ENCODE measurements at regions of chr2 and their contacts with region 1.

Region 1: GRCh38 chr2:25453199-25453905 is 111.6 kb upstream of the DNMT3A start:
- DNase-seq: peak; percentile 24
- H3K4me3 Mint-ChIP-seq: peak overlapping the region; percentile 51
- H3K27ac Mint-ChIP-seq: peak overlapping the region; percentile 90
- H3K4me1 Mint-ChIP-seq: peaks cover 42% of the 10 kb centered on the region
- H3K27me3 Mint-ChIP-seq: no peaks in the 10 kb centered on the region

Region 2: DNA sequence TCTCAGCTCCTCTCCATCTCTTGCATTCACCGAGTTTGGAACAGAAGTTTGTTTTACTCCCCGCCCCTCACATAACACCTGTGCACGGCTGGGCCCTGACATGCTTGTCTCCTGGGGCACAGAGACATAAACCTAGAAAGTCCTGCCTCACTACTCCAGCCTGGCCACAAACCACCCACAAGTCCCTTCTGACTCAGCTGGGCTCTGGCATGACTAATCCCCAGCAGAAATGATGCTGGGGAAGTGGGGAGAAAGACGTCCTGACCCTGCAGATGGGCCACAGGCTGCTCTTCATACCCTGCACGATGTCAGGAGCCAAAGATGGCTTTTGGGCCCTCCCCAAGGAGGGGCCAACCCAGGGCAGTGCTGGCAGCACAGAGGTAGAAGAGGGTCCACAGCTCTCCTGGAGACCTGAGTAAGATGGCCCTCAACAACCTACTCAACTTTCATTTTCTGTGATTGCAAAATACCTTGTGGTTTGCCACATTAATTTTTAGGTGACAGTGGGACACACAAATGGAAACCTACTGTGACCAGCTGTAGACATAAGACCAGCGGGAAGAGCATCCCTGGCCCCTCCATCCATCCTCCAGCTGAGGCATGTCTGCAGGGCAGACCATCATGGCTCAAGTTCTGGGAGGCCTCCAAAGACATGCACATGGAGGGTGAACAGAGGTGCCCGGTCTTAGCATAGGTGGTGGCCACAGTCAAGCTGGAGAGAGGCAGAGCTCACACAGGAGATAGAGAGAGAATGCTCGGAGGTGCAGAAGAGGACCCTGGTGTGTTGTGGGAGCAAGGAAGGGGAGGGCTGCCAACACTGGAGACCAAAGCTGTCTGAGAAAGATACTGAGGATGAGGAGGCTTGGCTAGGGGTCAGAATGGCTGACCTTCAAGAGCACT is 151.6 kb before region 1 on chr2:
- intact Hi-C with region 1: loop called (anchors 1 kb)
- DNase-seq: peak; percentile 76
- H3K4me3 Mint-ChIP-seq: peak overlapping the region; percentile 53
- H3K27ac Mint-ChIP-seq: peak overlapping the region; percentile 40
- H3K4me1 Mint-ChIP-seq: peaks cover 40% of the 10 kb centered on the region
- H3K27me3 Mint-ChIP-seq: no peaks in the 10 kb centered on the region

Region 3: GRCh38 chr2:25342372-25343186 is 110.8 kb before region 1 on chr2:
- intact Hi-C with region 1: loop called (anchors 2 kb)
- DNase-seq: peak; percentile 79
- H3K4me3 Mint-ChIP-seq: peak overlapping the region; percentile 88
- H3K27ac Mint-ChIP-seq: peak overlapping the region; percentile 88
- H3K4me1 Mint-ChIP-seq: peaks cover 37% of the 10 kb centered on the region
- H3K27me3 Mint-ChIP-seq: peaks cover 5% of the 10 kb centered on the region

Region 4: GRCh38 chr2:25376750-25377621 is 76.4 kb before region 1 on chr2:
- intact Hi-C with region 1: loop called (anchors 1 kb)
- DNase-seq: peak; percentile 92
- H3K4me3 Mint-ChIP-seq: peak overlapping the region; percentile 72
- H3K27ac Mint-ChIP-seq: peak overlapping the region; percentile 94
- H3K4me1 Mint-ChIP-seq: peaks cover 51% of the 10 kb centered on the region
- H3K27me3 Mint-ChIP-seq: no peaks in the 10 kb centered on the region

Region 5: GRCh38 chr2:25558262-25558661 is 104.9 kb after region 1 on chr2:
- intact Hi-C with region 1: loop called (anchors 1 kb)
- DNase-seq: peak; percentile 53
- H3K4me3 Mint-ChIP-seq: peak overlapping the region; percentile 46
- H3K27ac Mint-ChIP-seq: peak overlapping the region; percentile 98
- H3K4me1 Mint-ChIP-seq: peaks cover 63% of the 10 kb centered on the region
- H3K27me3 Mint-ChIP-seq: no peaks in the 10 kb centered on the region

Region 6: GRCh38 chr2:25831746-25832449 is 378.5 kb after region 1 on chr2:
- intact Hi-C with region 1: loop called (anchors 1 kb)
- DNase-seq: no peak
- H3K4me3 Mint-ChIP-seq: peak overlapping the region; percentile 63
- H3K27ac Mint-ChIP-seq: peak overlapping the region; percentile 90
- H3K4me1 Mint-ChIP-seq: peaks cover 49% of the 10 kb centered on the region
- H3K27me3 Mint-ChIP-seq: no peaks in the 10 kb centered on the region